Activated naive CD4-positive, alpha-beta T cell treated with anti-CD3 and anti-CD28 coated beads, Interleukin-2, amount 10 ng/mL, durations not matched to agents 7 days and 5 days (primary cell): ENCODE measurements at regions of chr10 and their contacts with region 1.

Region 1: DNA sequence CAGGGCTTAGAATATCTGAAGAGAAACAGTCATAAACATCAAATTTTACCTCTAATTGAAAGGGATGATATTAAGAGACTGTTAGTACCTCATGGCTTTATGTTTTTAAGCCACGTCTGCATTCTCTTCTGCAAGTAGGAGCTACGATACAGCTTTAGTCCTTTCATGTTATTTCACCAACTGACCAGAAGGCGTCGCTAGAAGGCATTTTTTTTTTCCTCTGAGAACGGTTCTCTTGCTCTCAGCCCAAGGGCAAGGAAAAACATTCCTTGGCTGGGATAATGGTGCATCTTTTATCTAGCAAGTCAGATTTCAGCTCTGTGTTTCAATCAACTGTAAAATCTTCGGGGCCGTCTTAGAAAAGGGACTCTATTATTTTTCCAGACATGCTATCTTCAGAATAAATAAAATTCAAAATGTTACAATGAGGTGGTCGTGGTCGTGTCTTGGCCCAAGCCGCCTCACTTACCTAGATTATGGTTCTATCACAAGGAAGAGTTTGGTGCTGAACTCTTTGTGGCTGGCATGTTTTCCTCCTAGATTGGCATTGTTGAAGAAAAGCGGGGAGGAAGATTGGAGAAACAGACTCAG is 41.6 kb upstream of the LYZL2 start:
- DNase-seq: no peak
- H3K4me3 Mint-ChIP-seq: peak overlapping the region; percentile 12
- H3K27ac Mint-ChIP-seq: no peak overlapping the region
- H3K4me1 Mint-ChIP-seq: peaks cover 9% of the 10 kb centered on the region
- H3K27me3 Mint-ChIP-seq: peaks cover 34% of the 10 kb centered on the region

Region 2: GRCh38 chr10:30502266-30503060 is 168.7 kb before region 1 on chr10:
- CTCF ChIA-PET with region 1: no interaction called
- DNase-seq: peak; percentile 75
- H3K4me3 Mint-ChIP-seq: peak overlapping the region; percentile 43
- H3K27ac Mint-ChIP-seq: peak overlapping the region; percentile 73
- H3K4me1 Mint-ChIP-seq: peaks cover 81% of the 10 kb centered on the region
- H3K27me3 Mint-ChIP-seq: peaks cover 16% of the 10 kb centered on the region

Region 3: DNA sequence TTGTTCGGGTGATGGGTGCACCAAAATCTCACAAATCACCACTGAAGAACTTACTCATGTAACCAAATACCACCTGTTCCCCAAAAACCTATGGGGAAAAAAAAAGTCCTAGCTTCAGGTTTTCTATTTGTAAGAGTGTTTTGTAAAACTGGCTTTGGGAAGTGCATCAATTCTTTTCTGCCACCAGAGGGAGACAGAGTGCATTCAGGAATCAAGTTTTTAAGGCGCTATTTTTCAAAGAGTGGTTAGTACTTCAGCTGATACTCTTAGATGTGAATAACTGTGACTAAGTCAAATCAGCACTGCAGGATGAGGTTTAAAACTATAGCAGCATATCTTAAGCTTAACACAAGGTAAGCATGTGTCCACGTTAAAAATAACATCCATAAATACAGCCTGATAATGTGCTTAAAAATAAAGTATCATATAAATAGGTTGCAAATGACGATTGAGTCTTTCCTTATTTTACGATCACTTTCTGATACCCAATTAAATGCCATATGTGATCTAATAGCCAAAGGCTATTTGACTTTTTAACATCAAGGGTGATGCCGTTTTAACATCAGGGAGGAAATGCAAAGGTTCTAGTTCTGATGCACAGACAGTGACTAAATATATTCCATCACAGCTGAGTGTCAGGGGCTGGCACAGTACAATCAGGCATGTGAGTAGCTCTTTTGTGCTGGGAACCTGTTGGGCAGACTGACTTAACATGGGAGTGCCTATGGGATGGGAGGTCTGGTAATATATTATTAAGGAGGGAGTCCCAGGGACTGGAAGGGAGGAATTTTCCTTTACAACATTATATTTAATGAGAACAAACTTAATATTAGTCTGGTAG is 31.0 kb before region 1 on chr10:
- CTCF ChIA-PET with region 1: interaction called, 23 read pairs
- DNase-seq: no peak
- H3K4me3 Mint-ChIP-seq: no peak overlapping the region
- H3K27ac Mint-ChIP-seq: no peak overlapping the region
- H3K4me1 Mint-ChIP-seq: no peaks in the 10 kb centered on the region
- H3K27me3 Mint-ChIP-seq: peaks cover 48% of the 10 kb centered on the region